Right ventricle myocardium superior (tissue), 1 donor: ENCODE measurements at regions of chr14 and their contacts with region 1.

Region 1: GRCh38 chr14:53953002-53953827 is 3.4 kb downstream of the BMP4 start:
- DNase-seq: peak; percentile 90
- ATAC-seq: peak; percentile 90

Region 2: GRCh38 chr14:53875324-53875897 is 77.8 kb before region 1 on chr14:
- intact Hi-C with region 1: loop called (anchors 2 kb)
- DNase-seq: no peak
- ATAC-seq: peak; percentile 71

Region 3: DNA sequence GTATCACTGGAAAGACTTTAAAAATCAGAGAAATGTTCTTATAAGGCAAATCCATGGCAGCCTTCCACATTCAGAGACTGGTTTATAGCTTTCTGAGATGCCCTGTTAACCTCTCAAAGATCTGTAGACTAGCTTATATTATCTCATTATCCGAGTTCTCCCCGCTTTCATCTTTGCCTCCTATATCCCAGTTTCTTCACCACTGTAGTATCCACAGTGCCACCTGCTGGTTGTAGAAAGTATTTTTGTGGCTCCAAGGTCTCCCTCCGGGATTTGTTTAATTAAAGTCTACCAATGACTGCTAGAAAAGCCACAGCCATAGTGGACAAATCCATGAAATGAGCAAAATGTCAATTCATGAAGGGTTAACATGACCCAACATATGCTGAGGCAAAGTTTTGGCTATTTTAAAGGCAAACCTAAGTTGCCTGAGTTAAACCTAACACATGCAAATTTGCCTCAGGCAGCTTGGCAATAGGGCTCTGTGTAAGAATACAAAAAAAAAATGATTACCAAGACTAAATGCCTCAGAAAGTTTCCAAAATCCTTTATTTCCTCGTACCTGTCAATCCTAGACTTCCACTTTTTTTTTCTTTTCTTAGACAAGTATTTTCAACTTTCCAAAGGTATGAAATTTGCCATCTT is 222.2 kb after region 1 on chr14:
- intact Hi-C with region 1: loop called (anchors 10 kb)
- DNase-seq: no peak
- ATAC-seq: peak; percentile 81